CD4-positive, alpha-beta memory T cell (primary cell): ENCODE measurements at regions of chr5 and their contacts with region 1.

Region 1: DNA sequence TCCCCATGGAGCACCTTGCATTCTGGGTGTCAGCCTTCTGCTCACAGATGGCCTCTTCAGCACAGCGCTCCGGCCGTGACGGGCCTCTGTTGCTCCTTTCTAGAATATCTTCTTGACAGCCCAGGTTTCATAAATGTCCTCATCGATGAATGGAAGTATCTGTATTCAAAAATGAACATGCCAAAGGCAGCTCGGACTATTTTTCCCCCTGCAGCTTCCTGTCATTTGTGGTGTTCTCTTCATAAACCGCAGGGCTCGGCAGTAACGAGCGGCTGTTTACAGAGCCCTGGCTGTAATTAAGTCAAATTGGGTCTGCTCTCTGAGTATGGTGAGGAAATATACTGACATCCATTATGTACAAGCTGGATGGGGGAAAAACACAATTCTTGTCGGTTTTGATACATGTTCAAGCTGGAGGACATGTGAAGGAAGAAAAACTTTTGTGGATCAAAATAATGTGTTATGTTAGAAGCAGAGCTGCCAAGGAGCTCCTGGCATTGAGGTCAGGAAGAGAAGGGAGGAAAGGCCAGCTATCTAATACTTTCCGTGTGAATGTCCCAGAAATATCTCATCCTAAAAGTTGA is 154.1 kb upstream of the CD180 start:
- DNase-seq: peak in 4 of 5 donors; percentile 29 to 44 (median 40)
- H3K4me3 ChIP-seq: peak overlapping the region in 1 of 2 donors; percentile 3
- H3K4me3 Mint-ChIP-seq: peak overlapping the region; percentile 79 to 88 (median 84)
- H3K27ac ChIP-seq: peak overlapping the region; percentile 16
- H3K27ac Mint-ChIP-seq: peak overlapping the region; percentile 38 to 92 (median 88)
- H3K4me1 ChIP-seq: peaks cover 21% of the 10 kb centered on the region
- H3K4me1 Mint-ChIP-seq: peaks cover 15 to 31% (median 23%) of the 10 kb centered on the region in 4 donors
- H3K27me3 ChIP-seq: no peaks in the 10 kb centered on the region
- H3K27me3 Mint-ChIP-seq: peaks cover 1 to 2% of the 10 kb centered on the region in 2 donors

Region 2: DNA sequence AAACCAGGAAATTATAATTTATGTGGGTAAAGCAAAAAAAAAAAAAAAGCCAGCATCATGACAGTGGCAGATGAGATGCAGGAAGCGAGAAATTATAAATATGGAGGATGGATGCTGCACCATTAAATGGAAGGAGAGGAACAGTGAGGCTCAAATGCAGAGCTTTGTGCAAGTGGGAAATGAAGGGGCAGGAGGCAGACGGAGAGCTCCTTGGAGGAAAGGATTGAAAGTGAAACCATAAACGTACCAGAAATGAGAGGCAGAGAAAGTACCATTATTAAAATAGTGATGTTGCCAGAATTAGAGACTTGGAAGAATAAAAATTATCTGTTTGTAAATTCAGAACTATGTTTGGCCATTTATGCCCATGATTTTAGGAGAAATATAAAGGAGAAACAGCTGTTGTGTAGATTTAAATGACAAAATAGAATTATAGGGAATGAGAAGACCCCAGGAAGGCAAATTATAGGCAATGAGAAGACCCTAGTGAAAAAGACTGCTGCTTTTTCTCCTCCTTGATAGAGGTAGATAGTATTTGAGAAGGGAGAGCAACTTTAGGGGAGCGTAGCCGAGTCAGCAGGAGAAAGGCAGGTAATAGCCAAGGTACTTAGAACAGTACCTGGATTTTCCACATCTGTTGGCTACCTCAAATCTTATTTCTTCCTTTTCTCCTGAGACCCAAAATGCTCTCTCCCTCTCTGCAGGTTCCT is 186.9 kb after region 1 on chr5:
- CTCF ChIA-PET with region 1: no interaction called
- POLR2A ChIA-PET with region 1: no interaction called
- intact Hi-C with region 1: loop called (anchors 10 kb)
- DNase-seq: peak in 1 of 5 donors; percentile 28
- H3K4me3 ChIP-seq: peak overlapping the region; percentile 26 to 49
- H3K4me3 Mint-ChIP-seq: no peak overlapping the region
- H3K27ac ChIP-seq: no peak overlapping the region
- H3K27ac Mint-ChIP-seq: no peak overlapping the region
- H3K4me1 ChIP-seq: peaks cover 16% of the 10 kb centered on the region
- H3K4me1 Mint-ChIP-seq: peaks cover 0 to 5% (median 2%) of the 10 kb centered on the region in 4 donors
- H3K27me3 ChIP-seq: no peaks in the 10 kb centered on the region
- H3K27me3 Mint-ChIP-seq: no peaks in the 10 kb centered on the region